WTC11 (cell line): ENCODE measurements at regions of chr12 and their contacts with region 1.

Region 1: DNA sequence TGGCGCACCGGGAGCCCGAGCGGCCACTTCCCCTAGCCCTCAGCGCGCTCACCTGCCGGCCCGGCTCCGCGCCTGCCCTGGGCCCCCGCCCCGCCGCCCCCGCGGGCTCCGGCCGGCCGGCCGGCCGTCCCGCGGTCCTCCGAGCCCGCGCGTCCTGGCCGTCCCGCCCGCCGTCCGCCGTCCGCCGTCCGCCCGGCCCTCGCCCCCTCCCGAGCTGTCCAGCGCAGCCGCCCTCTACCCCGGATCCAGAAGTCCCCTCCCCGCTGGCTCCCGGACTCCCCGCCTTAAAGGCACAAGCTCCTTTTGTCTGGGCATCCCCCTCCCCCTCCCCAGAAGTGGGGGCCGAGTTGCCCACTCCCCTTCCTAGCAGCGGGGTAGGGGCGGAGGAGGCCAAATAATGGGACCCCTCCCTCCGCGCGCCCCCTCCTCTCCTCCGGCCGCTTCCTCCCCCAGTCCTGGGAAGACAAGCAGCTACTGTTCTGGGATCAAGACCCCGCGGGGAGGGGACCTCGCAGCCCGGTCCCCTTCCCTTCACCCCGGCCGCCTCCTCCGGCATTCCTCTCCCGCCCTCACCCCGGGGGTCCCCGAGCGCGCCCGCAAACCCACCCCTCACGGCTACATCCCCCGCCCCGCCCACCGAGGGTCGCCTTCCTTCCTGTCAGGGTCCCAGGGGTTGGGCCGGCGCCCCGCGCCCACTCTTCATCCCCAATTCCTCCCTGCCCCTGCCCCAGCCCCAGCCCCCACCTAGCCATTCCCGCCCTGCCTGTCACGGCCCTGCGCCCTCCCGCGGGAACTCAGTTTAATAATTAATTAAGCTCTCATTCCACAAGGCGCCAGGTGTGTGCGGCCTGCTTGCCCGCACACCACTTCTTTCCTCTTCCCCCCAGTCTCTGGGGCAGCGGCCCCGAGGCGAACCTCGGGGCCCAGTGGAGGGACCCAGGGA is at the start of gene ADCY6:
- DNase-seq: peak; percentile 80
- ATAC-seq: peak; percentile 66
- H3K4me3 Mint-ChIP-seq: peak within 1 kb of the TSS; percentile 94
- H3K27ac Mint-ChIP-seq: peak within 1 kb of the TSS; percentile 39; the same call in 1 of the 2 replicates
- H3K4me1 Mint-ChIP-seq: peaks cover 24% of the 10 kb centered on the region
- H3K27me3 Mint-ChIP-seq: peaks cover 28% of the 10 kb centered on the region
- CTCF ChIP-seq: no peak
- total RNA-seq, gene ADCY6: 11.9 to 12.8 TPM (median 12.2 TPM) in 3 replicates

Region 2: GRCh38 chr12:48681738-48682532 is 107.2 kb before region 1 on chr12 and contains the start of gene KANSL2:
- CTCF ChIA-PET with region 1: no interaction called
- POLR2A ChIA-PET with region 1: no interaction called
- DNase-seq: peak; percentile 98
- ATAC-seq: peak; percentile 99
- H3K4me3 Mint-ChIP-seq: peak within 1 kb of the TSS; percentile 97
- H3K27ac Mint-ChIP-seq: peak within 1 kb of the TSS; percentile 86
- H3K4me1 Mint-ChIP-seq: peaks cover 18% of the 10 kb centered on the region
- H3K27me3 Mint-ChIP-seq: no peaks in the 10 kb centered on the region; the same call in 1 of the 2 replicates
- CTCF ChIP-seq: no peak
- total RNA-seq, gene KANSL2: 38.4 to 48.1 TPM (median 41.1 TPM) in 3 replicates

Region 3: DNA sequence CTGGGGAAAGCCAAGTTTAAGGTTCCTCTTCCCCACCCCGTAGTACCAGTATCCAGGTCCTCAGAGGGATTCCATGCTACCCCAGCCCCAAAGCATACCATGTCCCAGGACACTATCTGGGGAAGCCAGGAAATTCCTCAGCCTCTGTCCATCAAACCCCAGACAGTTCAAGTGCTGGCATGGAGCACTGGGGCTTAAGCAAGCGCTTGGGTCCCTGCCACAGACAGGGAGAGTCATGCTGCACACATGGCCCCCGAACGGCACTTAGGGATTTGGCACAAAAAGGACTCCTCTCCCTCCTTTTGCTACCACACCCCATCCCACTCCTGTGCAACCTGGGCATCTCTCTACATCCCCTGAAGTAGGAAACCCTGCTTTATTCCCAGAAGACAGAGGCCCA is 22.1 kb before region 1 on chr12:
- CTCF ChIA-PET with region 1: interaction called, 12 read pairs
- POLR2A ChIA-PET with region 1: interaction called, 4 read pairs
- DNase-seq: no peak
- ATAC-seq: no peak
- H3K4me3 Mint-ChIP-seq: no peak overlapping the region
- H3K27ac Mint-ChIP-seq: 0 out of 2 replicates have a peak overlapping the region, but pooled peaks have one; percentile 61
- H3K4me1 Mint-ChIP-seq: peaks cover 20% of the 10 kb centered on the region
- H3K27me3 Mint-ChIP-seq: no peaks in the 10 kb centered on the region; the same call in 1 of the 2 replicates
- CTCF ChIP-seq: no peak

Region 4: DNA sequence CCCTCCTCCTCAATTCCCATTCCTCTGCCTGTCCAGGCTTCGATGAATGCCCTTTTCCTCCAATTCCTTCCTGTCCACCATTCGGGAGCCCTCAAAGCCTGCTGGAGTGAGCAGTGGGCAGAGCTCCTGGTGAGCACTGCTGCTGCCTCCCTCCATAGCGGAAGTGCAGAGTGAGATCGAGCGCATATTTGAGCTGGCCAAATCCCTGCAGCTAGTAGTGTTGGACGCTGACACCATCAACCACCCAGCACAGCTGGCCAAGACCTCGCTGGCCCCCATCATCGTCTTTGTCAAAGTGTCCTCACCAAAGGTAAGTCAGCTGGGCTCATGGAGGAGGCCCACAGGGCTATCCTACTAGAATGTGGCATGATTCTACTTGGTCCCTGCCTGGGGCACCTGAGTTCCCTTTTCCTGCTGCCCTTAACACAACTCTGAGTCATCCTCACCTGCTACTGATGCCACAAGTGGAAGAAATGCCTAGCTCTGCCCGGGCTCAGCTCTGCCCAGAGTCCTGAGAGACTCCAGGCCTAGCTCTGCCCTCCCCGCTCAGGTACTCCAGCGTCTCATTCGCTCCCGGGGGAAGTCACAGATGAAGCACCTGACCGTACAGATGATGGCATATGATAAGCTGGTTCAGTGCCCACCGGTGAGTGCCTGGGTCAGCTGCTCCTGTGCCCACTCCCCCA is 37.2 kb after region 1 on chr12:
- CTCF ChIA-PET with region 1: no interaction called
- POLR2A ChIA-PET with region 1: no interaction called
- DNase-seq: no peak
- ATAC-seq: no peak
- H3K4me3 Mint-ChIP-seq: no peak overlapping the region
- H3K27ac Mint-ChIP-seq: peak overlapping the region; percentile 51; the same call in 1 of the 2 replicates
- H3K4me1 Mint-ChIP-seq: peaks cover 13% of the 10 kb centered on the region
- H3K27me3 Mint-ChIP-seq: peaks cover 4% of the 10 kb centered on the region; the same call in 1 of the 2 replicates
- CTCF ChIP-seq: no peak

Region 5: GRCh38 chr12:48924617-48925303 is 135.6 kb after region 1 on chr12:
- CTCF ChIA-PET with region 1: no interaction called
- POLR2A ChIA-PET with region 1: no interaction called
- DNase-seq: peak; percentile 69
- ATAC-seq: peak; percentile 69
- H3K4me3 Mint-ChIP-seq: peak overlapping the region; percentile 82
- H3K27ac Mint-ChIP-seq: peak overlapping the region; percentile 80
- H3K4me1 Mint-ChIP-seq: peaks cover 15% of the 10 kb centered on the region
- H3K27me3 Mint-ChIP-seq: no peaks in the 10 kb centered on the region; the same call in 1 of the 2 replicates
- CTCF ChIP-seq: 0 out of 2 replicates have a peak, but pooled peaks have one; percentile 15